Breast epithelium (tissue), 4 donors: ENCODE measurements at regions of chr11 and their contacts with region 1.

Region 1: DNA sequence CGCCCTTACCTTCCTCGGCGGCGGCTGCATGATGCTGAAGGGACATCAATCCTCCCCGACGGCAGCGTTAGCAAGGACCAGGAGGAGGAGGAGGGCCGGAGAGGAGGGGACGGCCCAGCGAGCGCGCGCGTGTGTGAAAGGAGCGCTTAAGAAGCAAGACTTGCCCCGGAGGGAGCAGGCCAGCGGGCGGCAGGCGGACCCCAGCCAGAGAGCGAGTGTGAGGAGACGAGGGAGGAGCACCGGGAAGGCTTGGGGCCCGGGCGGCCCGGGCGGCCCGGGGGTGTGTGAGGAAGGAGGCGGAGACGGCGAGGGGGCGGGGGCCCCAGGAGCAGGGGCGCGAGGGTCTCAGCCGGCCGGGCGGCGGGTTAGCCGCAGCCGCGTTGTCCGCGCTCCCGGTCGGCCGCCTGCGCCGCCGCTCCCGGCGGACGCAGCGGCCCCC is 251 bp downstream of the FCHSD2 start:
- DNase-seq: peak in 1 of 2 donors; percentile 60
- H3K4me3 ChIP-seq: peak overlapping the region; percentile 81 to 93 (median 86)
- H3K27ac ChIP-seq: peak overlapping the region; percentile 94 to 97
- H3K4me1 ChIP-seq: no peaks in the 10 kb centered on the region
- H3K27me3 ChIP-seq: no peaks in the 10 kb centered on the region
- CTCF ChIP-seq: no peak
- POLR2A ChIP-seq: no peak

Region 2: GRCh38 chr11:72828081-72828682 is 313.7 kb before region 1 on chr11:
- intact Hi-C with region 1: loop called (anchors 5 kb)
- DNase-seq: no peak
- H3K4me3 ChIP-seq: no peak overlapping the region
- H3K27ac ChIP-seq: peak overlapping the region in 1 of 2 donors; percentile 52
- H3K4me1 ChIP-seq: peaks cover 0 to 4% of the 10 kb centered on the region in 2 donors
- H3K27me3 ChIP-seq: no peaks in the 10 kb centered on the region
- CTCF ChIP-seq: no peak
- POLR2A ChIP-seq: no peak